CD4-positive, alpha-beta T cell (primary cell): ENCODE measurements at regions of chr13 and their contacts with region 1.

Region 1: DNA sequence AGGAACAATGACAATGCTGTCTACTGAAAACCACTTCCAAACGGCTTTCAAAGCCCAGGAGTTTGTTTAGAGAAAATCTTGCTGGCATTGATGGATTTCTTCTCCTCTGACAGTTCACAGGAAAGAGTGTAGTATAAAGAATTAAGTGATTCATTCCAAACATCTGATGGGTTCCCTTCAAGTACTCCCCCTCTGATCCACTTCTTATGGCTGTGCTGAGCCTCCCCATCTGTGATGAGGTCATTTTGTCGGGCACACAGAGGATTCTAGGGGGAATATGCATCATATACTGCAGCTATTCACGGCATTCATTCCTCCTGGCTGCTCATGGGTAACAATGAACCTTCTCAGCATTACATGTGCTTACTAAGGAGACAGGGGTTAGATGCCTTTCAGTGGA is 107.9 kb downstream of the RGCC start:
- DNase-seq: no peak
- ATAC-seq: no peak
- H3K4me3 ChIP-seq: no peak overlapping the region
- H3K4me3 Mint-ChIP-seq: no peak overlapping the region
- H3K27ac ChIP-seq: no peak overlapping the region
- H3K27ac Mint-ChIP-seq: no peak overlapping the region
- H3K4me1 ChIP-seq: peaks cover 4% of the 10 kb centered on the region
- H3K4me1 Mint-ChIP-seq: peaks cover 27% of the 10 kb centered on the region
- H3K27me3 ChIP-seq: no peaks in the 10 kb centered on the region
- H3K27me3 Mint-ChIP-seq: no peaks in the 10 kb centered on the region
- CTCF ChIP-seq: no peak

Region 2: DNA sequence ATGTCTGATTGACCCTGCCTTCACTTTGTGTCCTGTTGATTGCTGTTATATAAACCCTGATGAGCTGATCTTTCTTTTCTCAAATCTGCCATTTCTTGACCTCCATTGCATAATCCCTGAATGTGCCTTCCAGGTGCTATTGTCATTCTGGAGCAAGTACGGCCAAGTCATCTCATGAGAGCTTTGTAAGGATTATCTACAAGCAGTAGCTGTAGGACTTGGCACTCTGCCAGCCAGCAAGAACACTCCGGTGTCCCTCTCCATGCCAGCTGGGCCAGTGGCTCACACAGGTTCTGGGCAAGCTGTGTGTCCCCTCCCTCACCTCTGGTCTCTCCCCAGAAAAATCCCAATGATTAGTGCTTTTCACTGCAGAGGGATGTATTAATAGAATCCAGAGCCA is 1246.9 kb before region 1 on chr13:
- CTCF ChIA-PET with region 1: no interaction called
- POLR2A ChIA-PET with region 1: no interaction called
- intact Hi-C with region 1: no loop called
- DNase-seq: peak in 3 of 14 experiments; percentile 27 to 31 (median 28)
- ATAC-seq: no peak
- H3K4me3 ChIP-seq: no peak overlapping the region
- H3K4me3 Mint-ChIP-seq: no peak overlapping the region
- H3K27ac ChIP-seq: no peak overlapping the region
- H3K27ac Mint-ChIP-seq: peak overlapping the region; percentile 61
- H3K4me1 ChIP-seq: peaks cover 34% of the 10 kb centered on the region
- H3K4me1 Mint-ChIP-seq: peaks cover 64% of the 10 kb centered on the region
- H3K27me3 ChIP-seq: no peaks in the 10 kb centered on the region
- H3K27me3 Mint-ChIP-seq: no peaks in the 10 kb centered on the region
- CTCF ChIP-seq: no peak

Region 3: DNA sequence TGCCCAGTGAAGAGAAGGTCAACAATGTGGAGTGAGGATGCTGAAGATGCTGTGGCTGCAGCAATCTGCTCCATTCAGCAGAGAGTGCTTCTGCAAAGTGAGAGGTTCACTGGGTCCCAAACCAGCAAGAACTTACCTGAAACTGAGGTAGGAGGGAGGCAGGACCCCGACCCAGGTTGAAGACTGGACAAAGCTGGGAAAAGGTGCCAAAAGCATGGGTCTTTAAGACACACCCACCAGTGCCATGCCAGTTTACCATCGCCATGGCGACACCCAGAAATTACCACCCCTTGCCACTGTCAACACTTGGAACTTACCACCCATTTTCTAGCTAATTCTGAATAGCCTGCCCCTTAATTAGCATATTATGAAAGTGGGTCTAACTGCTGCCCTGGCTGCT is 37.2 kb before region 1 on chr13:
- CTCF ChIA-PET with region 1: no interaction called
- POLR2A ChIA-PET with region 1: no interaction called
- intact Hi-C with region 1: loop called in 1 of 2 experiments (anchors 5 kb)
- DNase-seq: no peak
- ATAC-seq: no peak
- H3K4me3 ChIP-seq: no peak overlapping the region
- H3K4me3 Mint-ChIP-seq: no peak overlapping the region
- H3K27ac ChIP-seq: no peak overlapping the region
- H3K27ac Mint-ChIP-seq: no peak overlapping the region
- H3K4me1 ChIP-seq: no peaks in the 10 kb centered on the region
- H3K4me1 Mint-ChIP-seq: no peaks in the 10 kb centered on the region
- H3K27me3 ChIP-seq: no peaks in the 10 kb centered on the region
- H3K27me3 Mint-ChIP-seq: no peaks in the 10 kb centered on the region
- CTCF ChIP-seq: no peak